T-cell (primary cell): ENCODE measurements at regions of chr19 and their contacts with region 1.

Region 1: DNA sequence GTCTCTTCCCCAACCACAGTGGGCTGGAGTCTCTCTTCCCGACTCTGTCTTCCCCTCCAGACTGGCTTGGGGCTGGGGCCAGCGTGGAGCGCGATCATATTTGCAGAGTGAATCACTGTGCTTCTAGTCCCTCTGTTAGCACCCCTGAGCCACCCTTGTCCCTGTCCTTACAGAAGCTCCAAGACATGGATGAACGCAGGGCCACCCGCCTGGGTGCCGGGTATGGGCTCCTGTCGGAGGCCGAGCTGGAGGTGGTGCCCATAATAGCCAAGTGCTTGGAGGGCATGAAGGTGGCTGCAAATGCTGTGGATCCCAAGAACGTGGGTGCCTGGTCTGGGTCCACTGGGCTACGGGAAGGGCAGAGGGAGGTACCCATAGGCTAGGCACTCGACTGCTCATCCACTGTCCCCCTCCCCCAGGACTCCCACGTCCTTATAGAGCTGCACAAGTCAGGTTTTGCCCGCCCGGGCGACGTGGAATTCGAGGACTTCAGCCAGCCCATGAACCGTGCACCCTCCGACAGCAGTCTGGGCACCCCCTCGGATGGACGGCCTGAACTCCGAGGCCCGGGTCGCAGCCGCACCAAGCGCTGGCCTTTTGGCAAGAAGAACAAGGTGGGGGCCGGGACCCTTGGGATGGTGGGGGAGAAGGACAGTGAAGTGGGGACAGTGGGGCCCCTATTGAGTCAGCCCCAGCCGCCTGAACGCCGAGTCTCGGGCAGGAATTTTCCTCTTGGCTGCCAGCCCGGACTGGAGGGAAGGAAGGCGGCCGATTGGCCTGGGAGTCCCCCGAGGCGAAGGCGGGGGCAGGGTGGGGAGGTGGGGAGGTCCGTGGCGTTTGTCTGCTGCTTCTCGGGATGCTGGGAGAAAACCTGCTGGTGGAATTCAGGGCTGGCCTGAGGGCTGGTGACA is 5.2 kb downstream of the TRIP10 start:
- DNase-seq: no peak
- ATAC-seq: no peak
- H3K4me3 ChIP-seq: no peak overlapping the region
- H3K4me3 Mint-ChIP-seq: no peak overlapping the region
- H3K27ac ChIP-seq: no peak overlapping the region
- H3K27ac Mint-ChIP-seq: peak overlapping the region in 1 of 2 donors; percentile 31
- H3K4me1 ChIP-seq: peaks cover 3 to 17% of the 10 kb centered on the region in 2 experiments
- H3K4me1 Mint-ChIP-seq: peaks cover 7 to 12% (median 11%) of the 10 kb centered on the region in 3 donors
- H3K27me3 ChIP-seq: peaks cover 0 to 14% of the 10 kb centered on the region in 2 experiments
- H3K27me3 Mint-ChIP-seq: no peaks in the 10 kb centered on the region

Region 2: GRCh38 chr19:6705931-6706632 is 38.6 kb before region 1 on chr19:
- CTCF ChIA-PET with region 1: no interaction called
- POLR2A ChIA-PET with region 1: no interaction called
- DNase-seq: no peak
- ATAC-seq: no peak
- H3K4me3 ChIP-seq: no peak overlapping the region
- H3K4me3 Mint-ChIP-seq: no peak overlapping the region
- H3K27ac ChIP-seq: no peak overlapping the region
- H3K27ac Mint-ChIP-seq: no peak overlapping the region
- H3K4me1 ChIP-seq: peaks cover 0 to 7% of the 10 kb centered on the region in 2 experiments
- H3K4me1 Mint-ChIP-seq: peaks cover 9 to 12% (median 10%) of the 10 kb centered on the region in 3 donors
- H3K27me3 ChIP-seq: peaks cover 0 to 50% of the 10 kb centered on the region in 2 experiments
- H3K27me3 Mint-ChIP-seq: peaks cover 30% of the 10 kb centered on the region in 2 donors

Region 3: DNA sequence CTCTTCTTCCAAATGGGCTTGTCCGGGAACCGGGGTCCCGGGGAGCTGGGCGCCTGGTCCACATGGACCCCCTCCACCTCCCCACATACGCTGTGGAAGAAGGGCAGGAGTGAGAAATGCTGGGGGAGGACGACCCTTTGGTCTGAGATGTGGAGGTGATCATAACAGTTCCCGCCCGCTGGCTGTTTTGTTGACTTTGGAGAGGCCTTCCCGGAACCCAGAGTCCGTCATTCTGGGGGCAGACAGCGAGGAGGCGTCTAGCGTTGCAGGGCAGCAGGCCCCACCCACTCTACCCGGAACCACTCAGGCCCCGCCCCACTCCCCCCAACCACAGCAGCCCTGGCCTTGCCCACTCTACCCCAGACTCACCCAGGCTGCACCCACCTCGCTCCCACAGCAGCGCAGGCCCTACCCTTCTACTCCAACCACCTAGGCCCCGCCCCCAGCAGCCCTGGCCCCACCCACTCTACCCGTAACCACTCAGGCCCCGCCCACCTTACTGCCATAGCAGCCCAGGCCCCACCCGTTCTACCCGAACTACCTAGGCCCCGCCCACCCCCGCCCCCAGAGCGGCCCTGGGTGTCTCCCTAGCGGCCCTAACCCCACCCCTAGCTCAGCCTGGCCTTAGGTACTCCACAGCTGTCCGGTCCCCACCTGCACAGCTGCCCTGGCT is 14.3 kb before region 1 on chr19:
- CTCF ChIA-PET with region 1: no interaction called
- POLR2A ChIA-PET with region 1: interaction called in 1 of 2 experiments, 11 read pairs
- DNase-seq: peak in 6 of 35 experiments; percentile 20 to 43 (median 28)
- ATAC-seq: peak in 2 of 4 experiments; percentile 19 to 40
- H3K4me3 ChIP-seq: no peak overlapping the region
- H3K4me3 Mint-ChIP-seq: no peak overlapping the region
- H3K27ac ChIP-seq: no peak overlapping the region
- H3K27ac Mint-ChIP-seq: no peak overlapping the region
- H3K4me1 ChIP-seq: no peaks in the 10 kb centered on the region
- H3K4me1 Mint-ChIP-seq: peaks cover 3 to 11% (median 8%) of the 10 kb centered on the region in 3 donors
- H3K27me3 ChIP-seq: no peaks in the 10 kb centered on the region
- H3K27me3 Mint-ChIP-seq: no peaks in the 10 kb centered on the region

Region 4: GRCh38 chr19:7968008-7968795 is 1223.6 kb after region 1 on chr19:
- CTCF ChIA-PET with region 1: no interaction called
- POLR2A ChIA-PET with region 1: no interaction called
- DNase-seq: no peak
- ATAC-seq: no peak
- H3K4me3 ChIP-seq: no peak overlapping the region
- H3K4me3 Mint-ChIP-seq: no peak overlapping the region
- H3K27ac ChIP-seq: no peak overlapping the region
- H3K27ac Mint-ChIP-seq: no peak overlapping the region
- H3K4me1 ChIP-seq: no peaks in the 10 kb centered on the region
- H3K4me1 Mint-ChIP-seq: no peaks in the 10 kb centered on the region
- H3K27me3 ChIP-seq: no peaks in the 10 kb centered on the region
- H3K27me3 Mint-ChIP-seq: no peaks in the 10 kb centered on the region